ENCODE measurements at regions of chr2 and their contacts with region 1.

Region 1: GRCh38 chr2:175743011-175743410 is 259.1 kb downstream of the LNPK start:
- DNase-seq: no peak
- H3K4me3 ChIP-seq: no peak overlapping the region
- H3K27ac ChIP-seq: no peak overlapping the region
- H3K4me1 ChIP-seq: no peaks in the 10 kb centered on the region
- H3K27me3 ChIP-seq: peaks cover 2% of the 10 kb centered on the region
- CTCF ChIP-seq: no peak
- EP300 ChIP-seq: no peak
- POLR2A ChIP-seq: no peak

Region 2: GRCh38 chr2:175766880-175767279 is 23.9 kb after region 1 on chr2:
- in situ Hi-C with region 1: no loop called
- intact Hi-C with region 1: no loop called
- DNase-seq: no peak
- H3K4me3 ChIP-seq: no peak overlapping the region
- H3K27ac ChIP-seq: no peak overlapping the region
- H3K4me1 ChIP-seq: no peaks in the 10 kb centered on the region
- H3K27me3 ChIP-seq: no peaks in the 10 kb centered on the region
- CTCF ChIP-seq: no peak
- EP300 ChIP-seq: no peak
- POLR2A ChIP-seq: no peak

Region 3: DNA sequence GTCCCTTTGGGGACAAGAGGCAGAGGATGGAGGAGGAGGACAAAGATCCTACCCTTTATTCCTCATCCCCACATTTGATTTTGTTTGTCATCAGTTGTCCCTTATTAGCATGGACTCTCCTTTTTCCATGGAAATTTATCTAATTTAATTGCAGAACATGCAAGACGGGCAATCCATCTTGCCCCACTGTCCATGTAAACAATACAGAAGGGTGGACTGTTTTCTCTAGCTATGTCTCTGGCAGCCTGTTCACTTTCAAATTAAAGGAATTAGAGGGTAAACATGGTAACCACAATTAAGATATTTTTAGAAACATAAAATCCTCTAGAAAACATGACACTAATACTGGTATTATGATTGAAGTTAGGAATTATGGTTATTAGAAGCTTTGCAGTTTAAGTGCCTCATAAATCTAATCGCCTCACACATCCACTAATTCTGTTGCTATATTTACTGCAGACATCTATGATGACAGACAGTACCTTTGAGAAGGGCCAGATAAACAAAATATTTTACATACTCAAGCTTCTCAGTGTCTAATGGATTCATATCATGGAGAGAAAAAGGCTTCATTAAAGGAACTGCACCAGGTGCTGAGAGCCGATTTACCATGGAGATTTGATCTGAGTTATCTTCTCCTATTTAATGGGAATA is 43.6 kb after region 1 on chr2:
- in situ Hi-C with region 1: no loop called
- intact Hi-C with region 1: loop called (anchors 2 kb)
- DNase-seq: no peak
- H3K4me3 ChIP-seq: no peak overlapping the region
- H3K27ac ChIP-seq: no peak overlapping the region
- H3K4me1 ChIP-seq: no peaks in the 10 kb centered on the region
- H3K27me3 ChIP-seq: no peaks in the 10 kb centered on the region
- CTCF ChIP-seq: no peak
- EP300 ChIP-seq: no peak
- POLR2A ChIP-seq: no peak

Measured in transverse colon (tissue), 4 donors.